Naive thymus-derived CD4-positive, alpha-beta T cell (primary cell): ENCODE measurements at regions of chr7 and their contacts with region 1.

Region 1: GRCh38 chr7:149090397-149091195 is at the start of gene ZNF786:
- DNase-seq: peak; percentile 87 to 97 (median 92)
- ATAC-seq: peak; percentile 95
- H3K4me3 ChIP-seq: peak within 1 kb of the TSS; percentile 93
- H3K4me3 Mint-ChIP-seq: peak within 1 kb of the TSS; percentile 91 to 100 (median 99)
- H3K27ac ChIP-seq: peak within 1 kb of the TSS; percentile 85
- H3K27ac Mint-ChIP-seq: peak within 1 kb of the TSS; percentile 93 to 100 (median 99)
- H3K4me1 ChIP-seq: peaks cover 8 to 9% of the 10 kb centered on the region in 2 donors
- H3K4me1 Mint-ChIP-seq: peaks cover 18 to 40% (median 35%) of the 10 kb centered on the region in 7 donors
- H3K27me3 ChIP-seq: no peaks in the 10 kb centered on the region
- H3K27me3 Mint-ChIP-seq: no peaks in the 10 kb centered on the region
- total RNA-seq, gene ZNF786: 5.4 to 22.0 (median 10.0) TPM

Region 2: GRCh38 chr7:148503875-148504487 is 586.6 kb before region 1 on chr7:
- CTCF ChIA-PET with region 1: no interaction called
- POLR2A ChIA-PET with region 1: no interaction called
- intact Hi-C with region 1: loop called (anchors 1 to 10 kb)
- DNase-seq: peak in 7 of 9 donors; percentile 18 to 52 (median 40)
- ATAC-seq: no peak
- H3K4me3 ChIP-seq: no peak overlapping the region
- H3K4me3 Mint-ChIP-seq: no peak overlapping the region
- H3K27ac ChIP-seq: no peak overlapping the region
- H3K27ac Mint-ChIP-seq: no peak overlapping the region
- H3K4me1 ChIP-seq: no peaks in the 10 kb centered on the region
- H3K4me1 Mint-ChIP-seq: peaks cover 0 to 7% (median 0%) of the 10 kb centered on the region in 7 donors
- H3K27me3 ChIP-seq: no peaks in the 10 kb centered on the region
- H3K27me3 Mint-ChIP-seq: peaks cover 0 to 27% (median 16%) of the 10 kb centered on the region in 5 donors

Region 3: DNA sequence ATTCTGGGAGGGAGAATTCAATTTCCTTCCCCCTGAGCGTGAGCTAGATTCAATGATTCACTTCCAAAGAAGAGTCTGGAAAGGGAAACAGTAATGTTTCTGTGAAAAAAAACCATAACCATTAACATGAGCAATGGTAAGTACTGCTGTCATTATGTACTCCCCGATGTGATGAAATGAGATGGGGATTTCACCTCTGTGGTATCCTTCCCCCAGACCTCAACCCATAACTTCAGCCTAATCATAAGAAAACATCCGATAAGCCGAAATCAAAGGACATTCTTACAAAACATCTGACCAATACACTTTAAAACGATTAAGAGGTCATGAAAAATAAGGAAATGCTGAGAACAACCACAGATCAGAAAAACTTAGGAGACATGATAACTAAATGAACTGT is 233.7 kb before region 1 on chr7:
- CTCF ChIA-PET with region 1: no interaction called
- POLR2A ChIA-PET with region 1: no interaction called
- intact Hi-C with region 1: loop called in 1 of 2 experiments (anchors 1 kb)
- DNase-seq: no peak
- ATAC-seq: peak; percentile 57
- H3K4me3 ChIP-seq: no peak overlapping the region
- H3K4me3 Mint-ChIP-seq: peak overlapping the region in 1 of 10 donors; percentile 60
- H3K27ac ChIP-seq: no peak overlapping the region
- H3K27ac Mint-ChIP-seq: peak overlapping the region in 1 of 9 donors; percentile 63
- H3K4me1 ChIP-seq: peaks cover 3 to 5% of the 10 kb centered on the region in 2 donors
- H3K4me1 Mint-ChIP-seq: peaks cover 8 to 45% (median 15%) of the 10 kb centered on the region in 7 donors
- H3K27me3 ChIP-seq: no peaks in the 10 kb centered on the region
- H3K27me3 Mint-ChIP-seq: no peaks in the 10 kb centered on the region

Region 4: DNA sequence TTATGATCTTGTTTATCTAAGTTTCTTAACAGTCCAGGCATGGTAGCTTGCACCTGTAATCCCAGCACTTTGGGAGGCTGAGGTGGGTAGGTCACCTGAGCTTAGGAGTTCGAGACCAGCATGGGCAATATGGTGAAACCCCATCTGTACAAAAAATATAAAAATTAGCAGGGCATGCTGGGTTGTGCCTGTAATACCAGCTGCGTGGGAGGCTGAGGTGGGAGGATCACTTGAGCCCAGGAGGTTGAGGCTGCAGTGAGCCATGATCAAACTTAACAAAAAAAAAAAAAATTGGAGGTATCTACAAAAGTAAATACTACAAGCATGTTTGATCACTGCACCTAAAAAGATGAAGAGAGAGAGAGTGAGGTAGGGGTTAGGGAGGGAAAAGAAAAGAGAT is 197.5 kb before region 1 on chr7:
- CTCF ChIA-PET with region 1: no interaction called
- POLR2A ChIA-PET with region 1: no interaction called
- intact Hi-C with region 1: no loop called
- DNase-seq: no peak
- ATAC-seq: no peak
- H3K4me3 ChIP-seq: no peak overlapping the region
- H3K4me3 Mint-ChIP-seq: no peak overlapping the region
- H3K27ac ChIP-seq: no peak overlapping the region
- H3K27ac Mint-ChIP-seq: no peak overlapping the region
- H3K4me1 ChIP-seq: no peaks in the 10 kb centered on the region
- H3K4me1 Mint-ChIP-seq: peaks cover 0 to 19% (median 12%) of the 10 kb centered on the region in 7 donors
- H3K27me3 ChIP-seq: no peaks in the 10 kb centered on the region
- H3K27me3 Mint-ChIP-seq: peaks cover 0 to 5% (median 0%) of the 10 kb centered on the region in 5 donors

Region 5: DNA sequence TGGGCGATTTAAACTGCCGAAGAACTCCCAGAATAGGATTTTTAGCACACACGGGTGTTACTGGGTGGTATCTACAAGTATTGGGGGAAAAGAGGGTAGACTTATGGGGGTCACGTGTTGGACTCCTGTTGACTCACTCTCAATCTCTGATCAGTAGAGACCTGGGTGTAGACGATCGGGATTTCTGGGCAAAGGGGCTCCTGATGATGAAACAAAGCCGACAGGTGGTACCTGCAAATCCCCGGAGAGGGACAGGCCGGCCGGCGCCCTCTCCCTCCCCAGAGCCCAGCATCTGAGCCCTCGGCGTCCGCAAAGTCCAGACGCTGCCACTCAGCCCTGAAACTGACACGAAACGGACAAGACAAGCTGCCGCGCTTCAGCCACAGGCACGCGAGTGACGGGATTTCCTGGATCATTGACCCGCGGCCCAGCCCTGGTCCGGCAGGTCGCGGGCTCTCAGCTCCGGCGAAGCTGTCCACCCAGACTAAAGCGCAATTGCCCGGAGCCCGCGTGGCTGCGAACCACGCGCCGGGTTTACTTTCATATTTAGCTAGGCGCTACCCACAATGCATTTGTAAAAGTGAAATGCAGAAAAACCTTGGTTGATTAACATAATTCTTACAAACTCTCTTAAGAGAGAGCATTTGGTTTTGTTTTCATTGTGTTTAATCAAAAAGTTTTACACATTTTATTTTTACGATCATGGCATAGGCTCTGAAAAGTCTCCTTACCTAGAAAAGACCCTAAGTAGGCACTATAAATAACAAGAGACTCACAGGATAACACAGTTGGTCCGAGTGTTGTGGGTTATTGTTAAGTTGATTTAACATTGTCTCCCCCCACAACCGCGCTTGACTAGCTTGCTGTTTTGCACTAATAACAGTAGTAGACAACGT is 149.6 kb before region 1 on chr7:
- CTCF ChIA-PET with region 1: no interaction called
- POLR2A ChIA-PET with region 1: no interaction called
- intact Hi-C with region 1: loop called in 1 of 2 experiments (anchors 1 kb)
- DNase-seq: peak; percentile 45 to 86 (median 76)
- ATAC-seq: peak; percentile 88
- H3K4me3 ChIP-seq: peak overlapping the region; percentile 95
- H3K4me3 Mint-ChIP-seq: peak overlapping the region; percentile 86 to 99 (median 96)
- H3K27ac ChIP-seq: peak overlapping the region; percentile 88
- H3K27ac Mint-ChIP-seq: peak overlapping the region; percentile 94 to 99 (median 98)
- H3K4me1 ChIP-seq: peaks cover 7 to 12% of the 10 kb centered on the region in 2 donors
- H3K4me1 Mint-ChIP-seq: peaks cover 8 to 25% (median 20%) of the 10 kb centered on the region in 7 donors
- H3K27me3 ChIP-seq: no peaks in the 10 kb centered on the region
- H3K27me3 Mint-ChIP-seq: no peaks in the 10 kb centered on the region

Region 6: DNA sequence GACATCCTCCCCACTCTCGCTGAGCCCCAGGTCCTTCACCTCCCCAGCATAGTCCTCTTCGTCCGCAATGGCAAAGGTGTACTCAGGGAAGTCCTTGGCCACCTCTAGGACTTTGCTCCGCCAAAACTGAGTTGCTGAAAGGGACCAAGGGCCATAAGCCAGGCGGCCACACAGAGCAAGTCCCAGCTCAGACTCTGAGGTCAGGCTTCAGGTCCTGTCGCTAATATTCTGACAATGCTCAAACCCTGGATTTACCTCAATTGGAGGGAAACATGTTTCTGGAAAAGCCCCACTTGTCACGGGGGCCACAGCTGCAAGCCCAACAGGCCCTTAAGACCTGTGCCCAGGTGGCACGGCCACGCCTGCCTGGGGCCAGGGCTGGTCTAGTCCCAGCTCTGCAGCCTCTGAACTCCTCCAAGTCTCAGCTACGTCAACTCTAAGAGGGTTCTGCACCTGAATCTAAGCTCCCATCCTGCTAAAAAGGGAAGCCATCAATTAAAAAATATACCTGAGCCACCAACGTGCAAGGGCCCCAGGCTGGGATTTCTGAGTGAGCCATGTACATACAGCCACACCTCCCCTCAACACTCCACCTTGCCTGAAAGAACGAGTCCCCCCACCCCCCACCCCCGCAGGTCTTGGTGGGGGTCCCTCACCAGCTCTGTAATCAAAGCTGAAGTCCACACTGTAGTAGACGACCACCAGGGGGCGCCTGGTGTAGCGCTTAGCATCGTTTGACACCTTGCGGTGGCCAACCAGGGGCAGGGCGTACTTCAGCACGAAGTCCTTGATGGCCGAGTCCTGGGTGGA is 85.2 kb before region 1 on chr7:
- CTCF ChIA-PET with region 1: interaction called, 5 read pairs
- POLR2A ChIA-PET with region 1: interaction called, 4 read pairs
- intact Hi-C with region 1: loop called (anchors 1 kb)
- DNase-seq: peak; percentile 57 to 80 (median 73)
- ATAC-seq: peak; percentile 96
- H3K4me3 ChIP-seq: no peak overlapping the region
- H3K4me3 Mint-ChIP-seq: no peak overlapping the region
- H3K27ac ChIP-seq: no peak overlapping the region
- H3K27ac Mint-ChIP-seq: peak overlapping the region in 5 of 9 donors; percentile 65 to 90 (median 74)
- H3K4me1 ChIP-seq: no peaks in the 10 kb centered on the region
- H3K4me1 Mint-ChIP-seq: peaks cover 0 to 9% (median 5%) of the 10 kb centered on the region in 7 donors
- H3K27me3 ChIP-seq: no peaks in the 10 kb centered on the region
- H3K27me3 Mint-ChIP-seq: no peaks in the 10 kb centered on the region

Region 7: DNA sequence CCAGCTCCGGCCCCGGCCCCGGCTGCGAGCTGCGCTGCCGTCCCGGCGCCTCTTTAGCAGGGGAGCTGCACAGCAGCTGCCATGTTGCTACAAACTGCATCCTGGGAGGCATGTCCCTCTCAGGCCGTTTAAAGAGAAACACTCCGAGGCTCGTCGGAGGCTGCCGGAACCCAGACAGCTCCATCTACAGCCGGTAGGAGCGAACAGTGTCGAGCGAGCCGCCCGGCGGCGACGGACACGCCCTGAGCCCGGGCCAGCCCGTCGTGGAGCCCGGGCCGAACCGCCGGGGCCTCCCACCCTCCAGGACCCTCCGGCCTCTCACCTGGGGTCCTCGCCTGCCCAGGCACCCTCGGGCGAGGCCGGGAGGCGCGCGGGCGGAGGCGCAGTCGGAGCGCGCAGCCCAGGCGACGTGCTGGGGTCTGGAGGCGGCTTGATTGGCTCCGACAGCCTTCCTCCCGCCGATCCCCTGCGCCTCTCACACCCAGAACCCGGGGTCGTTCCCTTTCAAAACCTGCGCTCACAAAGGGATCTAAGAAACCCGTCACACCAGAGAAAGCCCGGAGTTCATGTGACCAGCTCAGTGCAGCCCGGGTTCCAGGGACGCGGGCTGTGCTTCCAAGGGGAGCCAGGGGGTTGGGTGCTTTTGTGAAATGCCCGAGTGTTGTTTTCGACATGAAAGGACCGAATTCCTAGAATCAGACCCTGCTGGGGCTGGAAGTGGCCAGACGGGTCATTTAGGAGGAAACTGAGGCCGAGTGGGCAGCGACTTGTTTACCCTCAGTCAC is 370.1 kb after region 1 on chr7 and contains the start of gene ZNF777:
- CTCF ChIA-PET with region 1: no interaction called
- POLR2A ChIA-PET with region 1: no interaction called
- intact Hi-C with region 1: loop called in 1 of 2 experiments (anchors 1 kb)
- DNase-seq: peak; percentile 65 to 84 (median 80)
- ATAC-seq: peak; percentile 99
- H3K4me3 ChIP-seq: peak within 1 kb of the TSS; percentile 80
- H3K4me3 Mint-ChIP-seq: peak within 1 kb of the TSS; percentile 78 to 91 (median 87)
- H3K27ac ChIP-seq: peak within 1 kb of the TSS; percentile 72
- H3K27ac Mint-ChIP-seq: peak within 1 kb of the TSS; percentile 28 to 89 (median 76)
- H3K4me1 ChIP-seq: peaks cover 4 to 16% of the 10 kb centered on the region in 2 donors
- H3K4me1 Mint-ChIP-seq: peaks cover 13 to 46% (median 35%) of the 10 kb centered on the region in 7 donors
- H3K27me3 ChIP-seq: no peaks in the 10 kb centered on the region
- H3K27me3 Mint-ChIP-seq: peaks cover 4 to 29% (median 10%) of the 10 kb centered on the region in 5 donors
- total RNA-seq, gene ZNF777: 11.2 to 16.1 (median 14.3) TPM